Activated CD4-positive, alpha-beta T cell treated with anti-CD3 and anti-CD28 coated beads, Interleukin-2, amount 10 ng/mL, durations not matched to agents 24 days and 14 days (primary cell): ENCODE measurements at regions of chr15 and their contacts with region 1.

Region 1: GRCh38 chr15:85702321-85703101 is 92.2 kb downstream of the KLHL25 start:
- DNase-seq: peak; percentile 82
- H3K4me3 Mint-ChIP-seq: peak overlapping the region; percentile 76
- H3K27ac Mint-ChIP-seq: peak overlapping the region; percentile 94
- H3K4me1 Mint-ChIP-seq: peaks cover 56% of the 10 kb centered on the region
- H3K27me3 Mint-ChIP-seq: no peaks in the 10 kb centered on the region

Region 2: DNA sequence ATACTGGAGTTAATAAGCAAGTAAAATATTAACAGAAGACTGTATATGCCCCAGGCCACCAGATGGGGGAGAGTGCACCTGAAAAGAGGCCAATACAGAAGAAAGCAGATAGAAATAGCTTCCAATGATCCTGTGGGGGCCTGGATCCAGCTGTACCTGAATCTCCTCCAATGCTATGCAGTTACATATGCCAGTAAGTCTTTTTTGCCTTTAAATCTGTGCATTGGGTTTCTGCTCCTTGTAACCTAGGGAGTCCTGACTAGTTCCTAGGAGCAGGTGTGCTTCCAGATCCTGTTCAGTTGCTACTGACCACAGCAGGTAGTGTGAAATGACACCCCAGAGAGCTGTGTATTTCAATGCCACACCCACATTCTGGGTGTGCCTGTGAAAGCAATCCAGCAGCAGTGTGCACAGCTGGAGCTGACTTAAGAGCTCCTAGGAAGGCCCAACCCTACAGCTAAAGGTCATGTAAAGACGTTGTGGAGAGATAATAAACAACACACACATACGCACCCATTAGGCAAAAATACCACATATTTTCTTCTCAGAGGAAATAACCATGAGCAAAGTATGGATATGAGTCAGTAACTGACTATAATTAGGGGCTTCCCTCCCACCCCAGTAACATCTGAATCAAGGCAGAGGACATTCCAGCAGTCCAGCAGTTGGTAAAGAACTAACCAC is 384.3 kb before region 1 on chr15:
- intact Hi-C with region 1: loop called (anchors 5 kb)
- DNase-seq: peak; percentile 83
- H3K4me3 Mint-ChIP-seq: peak overlapping the region; percentile 64
- H3K27ac Mint-ChIP-seq: peak overlapping the region; percentile 86
- H3K4me1 Mint-ChIP-seq: peaks cover 55% of the 10 kb centered on the region
- H3K27me3 Mint-ChIP-seq: no peaks in the 10 kb centered on the region

Region 3: GRCh38 chr15:85543741-85544155 is 158.8 kb before region 1 on chr15:
- intact Hi-C with region 1: loop called (anchors 5 kb)
- DNase-seq: peak; percentile 82
- H3K4me3 Mint-ChIP-seq: peak overlapping the region; percentile 74
- H3K27ac Mint-ChIP-seq: peak overlapping the region; percentile 64
- H3K4me1 Mint-ChIP-seq: peaks cover 75% of the 10 kb centered on the region
- H3K27me3 Mint-ChIP-seq: no peaks in the 10 kb centered on the region

Region 4: GRCh38 chr15:85592148-85592547 is 110.4 kb before region 1 on chr15:
- intact Hi-C with region 1: no loop called
- DNase-seq: no peak
- H3K4me3 Mint-ChIP-seq: no peak overlapping the region
- H3K27ac Mint-ChIP-seq: no peak overlapping the region
- H3K4me1 Mint-ChIP-seq: peaks cover 29% of the 10 kb centered on the region
- H3K27me3 Mint-ChIP-seq: no peaks in the 10 kb centered on the region

Region 5: DNA sequence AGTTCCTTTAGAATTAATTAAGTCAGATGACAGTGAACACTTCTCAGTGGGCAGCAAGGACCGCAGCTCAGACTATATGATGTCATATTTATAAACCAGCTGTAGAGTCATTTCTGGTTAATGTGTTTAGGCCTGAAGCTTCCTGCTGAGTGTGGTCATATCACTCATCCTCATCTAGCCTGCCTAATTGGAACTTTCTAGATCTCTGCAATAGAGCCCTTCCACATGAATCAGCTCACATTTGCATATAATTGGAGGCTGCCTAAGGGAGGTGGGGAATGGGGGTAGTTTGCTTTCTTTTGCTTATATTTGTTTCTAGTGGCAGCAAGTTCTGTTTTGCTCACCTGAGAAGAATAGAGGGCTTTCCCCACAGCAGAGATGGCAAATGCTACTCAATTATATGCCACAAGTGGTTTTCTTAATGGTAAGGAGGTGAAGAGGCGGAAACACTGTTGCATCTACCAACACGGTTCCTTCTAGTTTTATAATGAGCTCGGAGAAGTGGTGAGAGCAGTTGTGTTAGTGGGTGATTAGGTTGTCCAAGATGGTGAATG is 55.9 kb before region 1 on chr15:
- intact Hi-C with region 1: loop called (anchors 2 kb)
- DNase-seq: peak; percentile 77
- H3K4me3 Mint-ChIP-seq: peak overlapping the region; percentile 52
- H3K27ac Mint-ChIP-seq: peak overlapping the region; percentile 94
- H3K4me1 Mint-ChIP-seq: peaks cover 34% of the 10 kb centered on the region
- H3K27me3 Mint-ChIP-seq: no peaks in the 10 kb centered on the region

Region 6: GRCh38 chr15:85733416-85733815 is 30.9 kb after region 1 on chr15:
- intact Hi-C with region 1: no loop called
- DNase-seq: no peak
- H3K4me3 Mint-ChIP-seq: no peak overlapping the region
- H3K27ac Mint-ChIP-seq: no peak overlapping the region
- H3K4me1 Mint-ChIP-seq: peaks cover 9% of the 10 kb centered on the region
- H3K27me3 Mint-ChIP-seq: no peaks in the 10 kb centered on the region